ENCODE measurements at regions of chr12 and their contacts with region 1.

Region 1: DNA sequence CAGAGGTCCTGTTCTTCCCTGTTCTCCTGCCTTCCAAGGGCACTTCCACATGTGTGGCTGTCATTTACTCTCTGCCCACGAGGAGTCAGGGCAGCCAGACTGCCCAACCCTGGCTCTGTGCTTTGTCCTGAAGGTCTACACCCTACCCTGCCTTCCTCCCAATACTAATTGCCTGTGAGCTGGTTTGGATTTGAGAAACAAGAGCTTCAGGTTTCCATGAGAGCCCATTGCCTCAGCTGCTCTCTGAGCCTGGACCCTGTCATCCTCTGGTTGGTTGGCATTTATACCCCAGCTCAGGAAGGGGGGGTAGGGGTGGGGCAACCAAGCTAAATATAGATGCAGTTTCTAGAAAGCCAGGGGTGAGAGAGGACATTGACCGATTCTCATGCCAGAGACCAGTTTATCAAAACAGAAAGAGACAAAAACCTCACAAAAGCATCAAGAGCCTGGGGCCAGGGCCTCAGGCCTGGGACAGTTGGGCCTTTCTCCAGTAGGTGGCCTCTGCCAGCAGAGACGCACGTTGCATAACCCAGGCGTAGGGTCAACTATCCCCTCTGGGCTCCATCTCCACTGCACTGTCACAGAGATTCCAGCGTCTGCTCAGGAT is 34.5 kb downstream of the VDR start:
- DNase-seq: no peak
- ATAC-seq: peak; percentile 51
- H3K4me3 ChIP-seq: no peak overlapping the region
- H3K4me3 Mint-ChIP-seq: peak overlapping the region in 1 of 10 donors; percentile 49
- H3K27ac ChIP-seq: no peak overlapping the region
- H3K27ac Mint-ChIP-seq: peak overlapping the region in 1 of 9 donors; percentile 84
- H3K4me1 ChIP-seq: no peaks in the 10 kb centered on the region
- H3K4me1 Mint-ChIP-seq: peaks cover 0 to 85% (median 0%) of the 10 kb centered on the region in 7 donors
- H3K27me3 ChIP-seq: no peaks in the 10 kb centered on the region
- H3K27me3 Mint-ChIP-seq: no peaks in the 10 kb centered on the region

Region 2: DNA sequence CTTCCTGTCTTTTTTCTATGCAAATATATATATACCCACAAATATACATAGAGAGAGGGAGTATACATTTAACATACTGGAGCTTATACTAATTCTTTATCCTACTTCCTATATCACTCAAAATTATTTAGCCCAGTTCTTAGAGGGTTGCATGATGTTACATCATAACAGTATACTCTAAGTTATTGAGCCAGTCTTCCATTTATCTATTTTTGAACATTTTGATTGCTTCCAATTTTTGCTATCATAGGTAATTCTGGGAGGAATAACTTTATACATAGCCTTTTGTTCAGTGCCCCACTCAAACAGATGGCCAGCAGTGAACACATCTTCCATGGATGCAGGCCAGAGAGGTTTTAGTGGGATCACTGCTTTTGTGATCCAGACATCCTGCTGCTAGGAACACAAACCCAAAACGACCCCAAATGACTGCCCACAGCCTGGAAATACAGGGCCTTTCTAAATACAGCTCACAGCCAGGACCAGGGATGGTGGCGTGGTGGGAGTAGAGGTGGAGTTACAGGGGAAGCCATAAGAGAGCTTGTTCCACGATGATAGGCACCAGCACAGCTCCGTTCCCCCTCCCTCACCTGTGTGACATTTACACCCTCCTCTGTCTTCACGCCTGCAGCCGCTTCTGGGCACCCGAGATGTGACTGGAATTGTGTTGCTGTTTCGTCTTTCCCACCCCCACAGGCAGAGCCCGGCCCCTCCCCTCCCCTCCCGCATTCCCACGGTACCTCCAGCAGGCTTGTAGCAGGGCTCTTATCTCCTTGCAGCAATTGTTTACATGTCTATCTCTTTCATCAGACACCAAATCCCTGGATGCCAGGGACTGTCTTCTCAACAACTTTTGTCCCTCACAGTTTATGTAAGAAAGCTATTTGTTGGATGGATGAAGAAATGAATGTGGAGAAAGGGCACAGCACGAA is 19.9 kb before region 1 on chr12:
- CTCF ChIA-PET with region 1: no interaction called
- POLR2A ChIA-PET with region 1: no interaction called
- intact Hi-C with region 1: no loop called
- DNase-seq: no peak
- ATAC-seq: no peak
- H3K4me3 ChIP-seq: no peak overlapping the region
- H3K4me3 Mint-ChIP-seq: no peak overlapping the region
- H3K27ac ChIP-seq: no peak overlapping the region
- H3K27ac Mint-ChIP-seq: peak overlapping the region in 2 of 9 donors; percentile 9 to 52
- H3K4me1 ChIP-seq: no peaks in the 10 kb centered on the region
- H3K4me1 Mint-ChIP-seq: peaks cover 0 to 23% (median 0%) of the 10 kb centered on the region in 7 donors
- H3K27me3 ChIP-seq: no peaks in the 10 kb centered on the region
- H3K27me3 Mint-ChIP-seq: no peaks in the 10 kb centered on the region

Region 3: DNA sequence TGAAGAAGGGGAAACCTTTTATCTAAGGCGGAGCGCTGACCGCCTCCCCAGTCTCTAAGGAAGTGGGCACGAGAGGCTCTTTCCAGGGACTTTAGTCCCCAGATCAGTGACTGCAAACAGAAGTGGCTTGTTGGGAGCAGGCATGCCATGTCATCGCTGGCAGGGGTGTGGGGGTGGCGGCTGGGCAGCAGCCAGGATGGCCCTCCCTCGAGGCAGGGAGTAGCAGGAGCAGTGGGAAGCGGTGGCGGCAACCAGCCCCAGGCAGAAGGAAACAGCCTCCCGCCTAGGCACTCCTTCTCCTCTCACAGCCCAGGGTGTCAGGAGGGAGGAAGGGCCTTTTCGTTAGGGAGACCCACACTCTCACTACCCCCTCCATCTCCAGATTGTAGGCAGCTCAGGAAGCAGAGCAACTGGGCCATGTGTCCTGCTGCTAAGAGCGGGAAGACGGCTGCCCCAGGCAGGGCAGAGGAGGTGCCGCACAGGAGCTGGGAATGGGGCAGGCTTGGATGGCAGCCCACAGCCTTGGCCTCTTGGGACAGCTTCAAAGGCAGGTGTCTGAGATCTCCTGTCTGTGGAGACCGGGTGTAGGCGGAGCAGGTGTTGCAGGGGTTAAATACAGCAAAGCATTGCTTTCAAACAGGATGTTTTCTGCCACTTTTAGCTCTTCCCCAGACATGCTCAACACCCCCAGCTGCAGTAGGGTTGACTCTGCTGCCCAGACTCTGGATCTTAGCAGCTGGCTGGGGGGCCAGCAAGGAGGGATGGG is 12.7 kb after region 1 on chr12:
- CTCF ChIA-PET with region 1: interaction called, 4 read pairs
- POLR2A ChIA-PET with region 1: interaction called, 10 read pairs
- intact Hi-C with region 1: loop called in 1 of 2 experiments (anchors 1 kb)
- DNase-seq: peak in 7 of 9 donors; percentile 30 to 60 (median 55)
- ATAC-seq: peak; percentile 71
- H3K4me3 ChIP-seq: peak overlapping the region; percentile 73
- H3K4me3 Mint-ChIP-seq: peak overlapping the region; percentile 84 to 95 (median 90)
- H3K27ac ChIP-seq: peak overlapping the region; percentile 50
- H3K27ac Mint-ChIP-seq: peak overlapping the region; percentile 72 to 99 (median 95)
- H3K4me1 ChIP-seq: peaks cover 14 to 38% of the 10 kb centered on the region in 2 donors
- H3K4me1 Mint-ChIP-seq: peaks cover 33 to 82% (median 54%) of the 10 kb centered on the region in 7 donors
- H3K27me3 ChIP-seq: no peaks in the 10 kb centered on the region
- H3K27me3 Mint-ChIP-seq: no peaks in the 10 kb centered on the region